WTC11 (cell line): ENCODE measurements at regions of chr20 and their contacts with region 1.

Region 1: GRCh38 chr20:53915446-53916172 is 154.8 kb downstream of the BCAS1 start:
- DNase-seq: peak; percentile 93
- ATAC-seq: peak; percentile 75
- H3K4me3 Mint-ChIP-seq: peak overlapping the region; percentile 86
- H3K27ac Mint-ChIP-seq: peak overlapping the region; percentile 90
- H3K4me1 Mint-ChIP-seq: peaks cover 46% of the 10 kb centered on the region
- H3K27me3 Mint-ChIP-seq: no peaks in the 10 kb centered on the region; the same call in 1 of the 2 replicates
- CTCF ChIP-seq: peak; percentile 76

Region 2: GRCh38 chr20:53547664-53548239 is 367.9 kb before region 1 on chr20:
- CTCF ChIA-PET with region 1: interaction called, 22 read pairs
- POLR2A ChIA-PET with region 1: no interaction called
- DNase-seq: peak; percentile 39
- ATAC-seq: peak; percentile 87
- H3K4me3 Mint-ChIP-seq: no peak overlapping the region
- H3K27ac Mint-ChIP-seq: peak overlapping the region; percentile 79; the same call in 1 of the 2 replicates
- H3K4me1 Mint-ChIP-seq: peaks cover 4% of the 10 kb centered on the region
- H3K27me3 Mint-ChIP-seq: no peaks in the 10 kb centered on the region
- CTCF ChIP-seq: peak; percentile 45

Region 3: DNA sequence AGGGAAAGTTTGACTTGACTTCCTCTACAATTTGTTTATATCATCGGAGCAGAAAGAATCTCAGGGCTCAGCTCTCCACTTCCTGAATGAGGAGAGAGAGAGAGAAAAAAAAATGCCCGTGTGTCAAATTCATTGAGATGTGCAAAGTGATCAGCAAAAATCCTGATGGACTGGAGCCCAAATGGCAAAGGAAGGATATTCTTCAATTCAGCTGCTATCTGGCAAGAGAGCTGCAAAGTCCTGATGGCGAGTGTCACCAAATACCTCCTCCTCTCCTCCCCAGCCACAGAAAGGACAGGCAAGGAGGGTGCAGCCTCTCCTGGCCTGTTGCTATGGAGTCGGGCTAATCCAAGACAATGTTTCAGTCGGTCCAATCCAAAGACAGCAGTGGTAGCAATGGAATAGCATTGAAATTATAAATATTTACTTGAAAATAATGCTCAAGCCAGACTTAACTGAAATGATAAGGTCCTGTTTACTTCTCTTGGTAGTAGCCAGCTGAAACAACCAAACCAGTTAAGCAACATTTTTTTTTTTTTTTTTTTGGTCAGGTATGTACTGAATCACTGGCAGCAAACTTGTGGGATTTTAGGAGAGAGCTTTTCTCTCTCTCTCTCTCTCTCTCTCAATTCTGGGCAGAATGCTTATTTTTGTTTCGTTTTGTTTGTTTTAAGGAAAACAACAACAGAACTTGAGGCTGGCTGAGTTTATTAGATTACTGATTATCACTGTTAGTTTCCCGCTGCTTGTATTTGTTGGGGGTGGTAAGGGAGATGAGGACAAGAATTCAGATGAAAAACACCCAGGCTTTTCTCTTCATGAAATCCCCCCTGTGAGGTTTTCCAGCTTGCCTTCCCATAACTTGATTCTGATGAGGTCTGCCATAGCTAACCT is 49.5 kb before region 1 on chr20:
- CTCF ChIA-PET with region 1: interaction called, 24 read pairs
- POLR2A ChIA-PET with region 1: interaction called, 3 read pairs
- DNase-seq: peak; percentile 26
- ATAC-seq: peak; percentile 56
- H3K4me3 Mint-ChIP-seq: peak overlapping the region; percentile 42
- H3K27ac Mint-ChIP-seq: peak overlapping the region; percentile 99
- H3K4me1 Mint-ChIP-seq: peaks cover 75% of the 10 kb centered on the region
- H3K27me3 Mint-ChIP-seq: no peaks in the 10 kb centered on the region
- CTCF ChIP-seq: no peak

Region 4: DNA sequence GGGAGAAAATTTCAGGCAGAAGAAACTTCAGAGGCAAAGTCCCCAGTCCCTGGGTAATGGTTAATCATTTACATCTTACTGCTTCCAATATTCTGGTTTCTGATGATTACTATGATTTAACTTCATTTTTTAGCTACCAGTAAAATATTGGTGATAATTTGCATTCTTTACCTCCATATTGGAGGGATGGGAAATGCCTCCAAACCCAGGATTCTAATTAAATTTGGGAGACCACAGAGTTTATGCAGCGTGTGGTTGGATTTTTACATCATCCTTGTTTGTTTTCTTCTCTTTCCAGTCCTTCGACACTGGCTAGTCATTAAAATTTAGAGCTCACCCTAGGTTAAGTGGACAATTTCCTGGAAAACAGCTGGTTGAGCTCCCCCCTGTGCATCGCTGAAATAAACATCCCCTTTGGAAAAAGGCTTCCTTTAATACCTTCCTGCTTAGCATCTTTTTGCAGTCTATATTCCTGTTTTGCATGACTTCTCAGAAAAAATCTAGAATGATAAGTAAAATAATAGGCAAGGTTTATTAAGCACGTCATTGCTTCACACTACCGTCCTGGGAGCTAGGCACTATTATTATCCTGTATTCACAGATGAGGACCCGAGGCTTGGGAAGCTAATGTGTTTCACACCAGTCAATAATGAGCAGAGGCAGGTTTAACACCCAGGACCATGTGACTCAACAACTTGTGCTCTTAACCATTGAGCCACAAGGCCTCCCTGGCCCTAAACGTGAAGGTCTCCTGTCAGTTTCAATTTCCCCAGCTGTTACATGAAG is 36.8 kb before region 1 on chr20:
- CTCF ChIA-PET with region 1: interaction called, 23 read pairs
- POLR2A ChIA-PET with region 1: no interaction called
- DNase-seq: no peak
- ATAC-seq: no peak
- H3K4me3 Mint-ChIP-seq: no peak overlapping the region
- H3K27ac Mint-ChIP-seq: no peak overlapping the region
- H3K4me1 Mint-ChIP-seq: peaks cover 53% of the 10 kb centered on the region
- H3K27me3 Mint-ChIP-seq: no peaks in the 10 kb centered on the region; the same call in 1 of the 2 replicates
- CTCF ChIP-seq: no peak

Region 5: DNA sequence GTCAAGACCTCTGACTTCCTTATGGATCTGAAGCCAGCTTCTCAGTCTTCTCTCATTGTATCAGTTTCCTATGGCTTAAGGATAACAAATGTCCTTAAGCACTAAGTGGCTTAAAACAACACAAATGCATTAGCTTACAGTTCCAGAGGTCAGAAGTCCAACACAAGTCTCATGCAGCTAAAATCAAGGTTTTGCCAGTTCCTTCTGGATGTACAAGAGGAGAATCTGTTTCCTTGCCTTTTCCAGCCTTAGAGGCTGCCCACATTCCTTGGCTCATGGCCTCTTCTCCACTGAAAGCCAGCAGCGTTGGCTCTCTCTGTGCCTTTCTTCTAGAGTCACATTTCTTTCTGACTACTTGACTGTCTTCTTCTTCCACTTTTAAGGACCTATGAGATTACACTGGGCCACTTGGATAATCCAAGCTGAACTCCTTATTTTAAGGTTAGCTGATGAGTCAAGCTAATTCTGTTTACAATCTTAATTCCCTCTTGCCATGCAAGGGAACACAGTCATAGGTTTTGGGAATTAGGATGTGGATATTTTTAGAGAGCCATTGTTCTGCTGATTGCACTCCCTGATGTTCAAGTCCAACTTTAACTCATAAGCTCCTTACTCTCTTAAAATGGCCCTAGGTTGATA is 24.2 kb before region 1 on chr20:
- CTCF ChIA-PET with region 1: interaction called, 68 read pairs
- POLR2A ChIA-PET with region 1: no interaction called
- DNase-seq: no peak
- ATAC-seq: no peak
- H3K4me3 Mint-ChIP-seq: no peak overlapping the region
- H3K27ac Mint-ChIP-seq: no peak overlapping the region
- H3K4me1 Mint-ChIP-seq: peaks cover 37% of the 10 kb centered on the region
- H3K27me3 Mint-ChIP-seq: no peaks in the 10 kb centered on the region; the same call in 1 of the 2 replicates
- CTCF ChIP-seq: no peak

Region 6: GRCh38 chr20:53934421-53935343 is 19.1 kb after region 1 on chr20:
- CTCF ChIA-PET with region 1: interaction called, 31 read pairs
- POLR2A ChIA-PET with region 1: interaction called, 5 read pairs
- DNase-seq: no peak
- ATAC-seq: peak; percentile 90
- H3K4me3 Mint-ChIP-seq: no peak overlapping the region
- H3K27ac Mint-ChIP-seq: no peak overlapping the region
- H3K4me1 Mint-ChIP-seq: peaks cover 40% of the 10 kb centered on the region
- H3K27me3 Mint-ChIP-seq: no peaks in the 10 kb centered on the region
- CTCF ChIP-seq: no peak